ENCODE measurements at regions of chr19 and their contacts with region 1.

Region 1: GRCh38 chr19:35269421-35270117 is 807 bp downstream of the USF2 start:
- DNase-seq: peak; percentile 71
- H3K4me3 Mint-ChIP-seq: peak overlapping the region; percentile 77
- H3K27ac Mint-ChIP-seq: peak overlapping the region; percentile 34
- H3K4me1 Mint-ChIP-seq: peaks cover 17% of the 10 kb centered on the region
- H3K27me3 Mint-ChIP-seq: no peaks in the 10 kb centered on the region

Region 2: DNA sequence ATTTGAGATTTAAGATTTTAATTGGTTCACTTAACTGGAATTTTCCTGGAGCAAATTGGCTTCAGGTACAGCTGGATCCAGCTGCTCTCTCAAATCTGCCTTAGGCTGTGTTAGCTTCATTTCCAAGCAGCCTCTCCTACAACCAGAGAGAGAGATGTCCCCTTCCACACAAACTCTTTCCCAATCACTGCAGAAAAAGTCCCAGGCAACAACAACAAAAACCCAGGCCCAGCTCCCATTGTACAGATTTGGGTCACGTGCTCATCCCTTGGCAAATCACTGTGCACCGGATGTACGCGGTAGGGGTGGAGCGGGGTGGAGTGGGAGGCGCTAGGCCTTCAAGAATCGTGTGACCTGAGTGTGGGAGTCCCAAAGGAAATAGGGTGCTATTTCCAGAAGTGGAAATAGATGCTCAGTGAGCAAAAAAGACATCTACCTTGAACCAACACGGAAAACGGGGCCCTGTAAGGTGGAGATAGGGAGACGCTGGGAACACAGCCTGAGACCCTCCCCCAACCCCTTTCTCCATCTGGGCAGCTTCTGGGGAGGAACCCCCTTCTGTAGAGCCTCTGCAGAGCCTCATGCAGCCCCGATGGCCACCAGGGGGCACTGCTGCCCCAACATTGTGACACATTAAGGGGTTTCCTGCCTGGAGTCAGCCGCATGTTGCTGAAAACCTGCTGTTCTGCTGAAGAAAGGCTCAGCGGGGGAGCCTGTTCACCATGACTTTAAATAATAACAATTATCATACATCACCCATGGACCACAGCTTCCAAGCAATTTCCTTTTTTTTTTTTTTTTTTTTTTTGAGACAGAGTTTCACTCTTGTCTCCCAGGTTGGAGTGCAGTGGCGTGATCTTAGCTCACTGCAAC is 202.6 kb before region 1 on chr19:
- intact Hi-C with region 1: loop called (anchors 2 kb)
- DNase-seq: peak; percentile 79
- H3K4me3 Mint-ChIP-seq: peak overlapping the region; percentile 42
- H3K27ac Mint-ChIP-seq: peak overlapping the region; percentile 57
- H3K4me1 Mint-ChIP-seq: peaks cover 16% of the 10 kb centered on the region
- H3K27me3 Mint-ChIP-seq: peaks cover 6% of the 10 kb centered on the region

Region 3: DNA sequence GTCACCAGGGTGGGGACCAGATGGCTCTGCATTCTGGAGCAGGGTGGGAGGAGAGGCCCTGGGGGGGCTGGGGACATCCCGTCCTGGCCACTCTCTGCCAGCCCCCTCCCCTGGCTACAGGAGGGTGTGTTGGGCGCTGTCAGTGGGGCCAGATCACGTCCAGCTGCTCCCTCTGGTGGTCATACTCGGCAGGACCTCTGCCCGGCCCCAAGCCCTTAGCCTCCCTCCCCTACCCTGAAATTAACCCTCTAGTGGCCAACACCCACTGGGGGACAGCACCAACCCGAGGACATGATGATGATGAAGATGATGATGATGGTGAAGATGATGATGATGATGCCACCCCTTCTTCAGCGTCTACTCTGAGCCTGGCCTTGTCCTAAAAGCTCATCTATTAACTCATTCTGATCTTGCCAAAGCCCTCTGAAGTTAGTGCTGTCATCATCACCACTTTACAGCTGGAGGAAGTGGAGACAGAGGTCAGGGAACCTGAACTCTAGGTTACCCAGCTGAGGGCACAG is 134.1 kb before region 1 on chr19:
- intact Hi-C with region 1: no loop called
- DNase-seq: peak; percentile 50
- H3K4me3 Mint-ChIP-seq: no peak overlapping the region
- H3K27ac Mint-ChIP-seq: no peak overlapping the region
- H3K4me1 Mint-ChIP-seq: peaks cover 8% of the 10 kb centered on the region
- H3K27me3 Mint-ChIP-seq: peaks cover 3% of the 10 kb centered on the region

Region 4: GRCh38 chr19:35154525-35155406 is 114.8 kb before region 1 on chr19 and contains the start of gene FXYD5:
- intact Hi-C with region 1: loop called (anchors 1 kb)
- DNase-seq: peak; percentile 60
- H3K4me3 Mint-ChIP-seq: peak within 1 kb of the TSS; percentile 100
- H3K27ac Mint-ChIP-seq: peak within 1 kb of the TSS; percentile 100
- H3K4me1 Mint-ChIP-seq: peaks cover 54% of the 10 kb centered on the region
- H3K27me3 Mint-ChIP-seq: peaks cover 7% of the 10 kb centered on the region
- total RNA-seq, gene FXYD5: 299 and 309 TPM in 2 replicates

Region 5: GRCh38 chr19:35236638-35237400 is 32.8 kb before region 1 on chr19:
- intact Hi-C with region 1: no loop called
- DNase-seq: no peak
- H3K4me3 Mint-ChIP-seq: no peak overlapping the region
- H3K27ac Mint-ChIP-seq: no peak overlapping the region
- H3K4me1 Mint-ChIP-seq: peaks cover 17% of the 10 kb centered on the region
- H3K27me3 Mint-ChIP-seq: peaks cover 7% of the 10 kb centered on the region

Region 6: GRCh38 chr19:35247526-35248306 is 21.9 kb before region 1 on chr19:
- intact Hi-C with region 1: loop called (anchors 1 kb)
- DNase-seq: no peak
- H3K4me3 Mint-ChIP-seq: peak overlapping the region; percentile 85
- H3K27ac Mint-ChIP-seq: peak overlapping the region; percentile 66
- H3K4me1 Mint-ChIP-seq: peaks cover 18% of the 10 kb centered on the region
- H3K27me3 Mint-ChIP-seq: peaks cover 27% of the 10 kb centered on the region

Region 7: DNA sequence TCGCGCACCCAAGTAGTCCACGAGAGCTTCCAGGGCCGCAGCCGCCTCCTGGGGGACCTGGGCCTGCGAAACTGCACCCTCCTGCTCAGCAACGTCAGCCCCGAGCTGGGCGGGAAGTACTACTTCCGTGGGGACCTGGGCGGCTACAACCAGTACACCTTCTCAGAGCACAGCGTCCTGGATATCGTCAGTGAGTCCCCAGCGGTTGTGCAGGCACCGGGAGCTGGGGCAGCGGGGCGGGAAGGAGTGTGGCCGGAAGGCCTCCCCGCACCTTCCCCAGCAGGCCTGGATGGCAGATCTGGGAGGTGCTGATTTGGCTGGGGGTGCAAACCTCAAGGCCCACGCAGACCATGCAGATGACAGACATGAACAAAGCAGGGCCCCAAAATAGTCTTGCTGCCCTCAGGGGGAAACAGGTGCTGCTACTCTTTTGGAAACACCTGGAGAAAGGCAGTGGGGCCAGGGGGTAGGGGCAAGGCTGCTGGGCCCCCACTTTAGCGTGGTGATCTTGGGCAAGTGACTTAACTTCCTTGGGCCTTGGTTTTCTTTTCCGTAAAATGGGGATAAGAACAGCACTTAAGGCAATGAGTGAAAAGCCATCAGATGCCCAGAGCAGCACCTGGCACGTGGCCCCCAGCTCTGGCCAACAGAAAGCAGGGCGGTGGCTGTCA is 26.4 kb after region 1 on chr19:
- intact Hi-C with region 1: no loop called
- DNase-seq: peak; percentile 21
- H3K4me3 Mint-ChIP-seq: no peak overlapping the region
- H3K27ac Mint-ChIP-seq: no peak overlapping the region
- H3K4me1 Mint-ChIP-seq: no peaks in the 10 kb centered on the region
- H3K27me3 Mint-ChIP-seq: peaks cover 8% of the 10 kb centered on the region

Region 8: DNA sequence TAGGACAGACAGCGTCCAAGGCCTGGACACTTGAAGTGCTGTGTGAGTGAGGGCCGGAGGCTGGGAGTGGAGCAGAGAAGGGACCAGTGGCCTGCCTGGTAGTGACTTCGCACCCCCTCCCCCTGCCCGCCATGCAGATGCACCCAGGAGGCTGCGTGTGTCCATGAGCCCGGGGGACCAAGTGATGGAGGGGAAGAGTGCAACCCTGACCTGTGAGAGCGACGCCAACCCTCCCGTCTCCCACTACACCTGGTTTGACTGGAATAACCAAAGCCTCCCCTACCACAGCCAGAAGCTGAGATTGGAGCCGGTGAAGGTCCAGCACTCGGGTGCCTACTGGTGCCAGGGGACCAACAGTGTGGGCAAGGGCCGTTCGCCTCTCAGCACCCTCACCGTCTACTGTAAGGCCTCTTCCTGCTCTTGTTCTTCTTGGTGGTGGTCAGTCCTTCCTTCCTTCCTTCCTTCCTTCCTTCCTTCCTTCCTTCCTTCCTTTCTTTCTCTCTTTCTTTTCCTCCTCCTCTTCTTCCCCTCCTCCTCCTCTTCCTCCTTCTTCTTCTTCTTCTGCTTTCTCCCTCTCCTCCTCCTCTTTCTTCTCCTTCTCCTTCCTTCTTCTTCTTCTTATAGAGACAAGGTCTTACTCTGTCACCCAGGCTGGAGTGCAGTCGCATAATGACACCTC is 72.1 kb after region 1 on chr19:
- intact Hi-C with region 1: no loop called
- DNase-seq: no peak
- H3K4me3 Mint-ChIP-seq: no peak overlapping the region
- H3K27ac Mint-ChIP-seq: no peak overlapping the region
- H3K4me1 Mint-ChIP-seq: peaks cover 13% of the 10 kb centered on the region
- H3K27me3 Mint-ChIP-seq: peaks cover 6% of the 10 kb centered on the region

Region 9: DNA sequence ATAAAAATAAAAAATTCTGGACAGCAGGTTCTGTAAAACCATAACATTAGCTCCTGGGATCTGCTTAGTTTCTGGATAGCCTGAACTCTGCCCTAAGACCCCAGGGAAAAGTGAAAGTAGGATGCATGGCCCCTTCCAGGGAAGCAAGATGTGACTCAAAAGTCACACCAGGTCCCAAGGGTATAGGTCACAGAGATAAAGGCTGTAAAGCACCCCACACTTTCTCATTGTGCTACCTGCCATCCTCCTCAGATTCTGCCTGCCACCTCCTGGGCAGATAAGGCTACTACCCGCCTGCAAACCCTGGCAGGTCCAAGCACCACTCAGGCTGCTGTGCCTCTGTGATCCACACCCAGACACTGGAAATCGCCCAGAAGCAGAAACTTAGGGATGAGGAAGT is 199.1 kb after region 1 on chr19:
- intact Hi-C with region 1: loop called (anchors 10 kb)
- DNase-seq: peak; percentile 47
- H3K4me3 Mint-ChIP-seq: no peak overlapping the region
- H3K27ac Mint-ChIP-seq: no peak overlapping the region
- H3K4me1 Mint-ChIP-seq: peaks cover 15% of the 10 kb centered on the region
- H3K27me3 Mint-ChIP-seq: peaks cover 11% of the 10 kb centered on the region

Region 10: GRCh38 chr19:35545001-35545911 is 275.7 kb after region 1 on chr19 and contains the start of gene TMEM147:
- intact Hi-C with region 1: loop called (anchors 5 kb)
- DNase-seq: peak; percentile 82
- H3K4me3 Mint-ChIP-seq: peak within 1 kb of the TSS; percentile 97
- H3K27ac Mint-ChIP-seq: peak within 1 kb of the TSS; percentile 91
- H3K4me1 Mint-ChIP-seq: peaks cover 34% of the 10 kb centered on the region
- H3K27me3 Mint-ChIP-seq: no peaks in the 10 kb centered on the region
- total RNA-seq, gene TMEM147: 122 and 123 TPM in 2 replicates